ENCODE measurements at regions of chr12 and their contacts with region 1.

Region 1: DNA sequence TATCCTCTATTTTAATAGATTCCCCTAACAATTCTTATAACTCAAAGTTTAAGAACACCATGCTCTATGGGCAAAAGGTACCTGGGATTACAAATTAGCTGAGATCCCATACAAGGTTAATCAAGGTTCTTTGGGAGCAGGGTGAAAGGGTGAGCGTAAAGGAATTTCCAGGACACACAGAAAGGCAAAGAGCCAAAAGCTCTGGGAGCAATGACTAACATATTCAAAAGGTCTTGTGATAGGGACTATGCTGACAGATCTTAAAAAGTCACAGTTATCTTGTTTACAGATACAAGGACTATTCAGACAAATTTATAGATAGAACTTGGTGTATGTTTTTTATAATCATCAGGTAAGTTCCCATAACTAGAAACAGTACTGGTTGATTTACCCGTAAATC is 19.5 kb upstream of the PPFIBP1 start:
- DNase-seq: no peak
- H3K4me3 Mint-ChIP-seq: no peak overlapping the region
- H3K27ac Mint-ChIP-seq: no peak overlapping the region
- H3K4me1 Mint-ChIP-seq: peaks cover 30% of the 10 kb centered on the region
- H3K27me3 Mint-ChIP-seq: peaks cover 32% of the 10 kb centered on the region

Region 2: GRCh38 chr12:27383429-27384260 is 120.9 kb before region 1 on chr12:
- intact Hi-C with region 1: no loop called
- DNase-seq: peak; percentile 52
- H3K4me3 Mint-ChIP-seq: no peak overlapping the region
- H3K27ac Mint-ChIP-seq: no peak overlapping the region
- H3K4me1 Mint-ChIP-seq: peaks cover 5% of the 10 kb centered on the region
- H3K27me3 Mint-ChIP-seq: no peaks in the 10 kb centered on the region

Region 3: DNA sequence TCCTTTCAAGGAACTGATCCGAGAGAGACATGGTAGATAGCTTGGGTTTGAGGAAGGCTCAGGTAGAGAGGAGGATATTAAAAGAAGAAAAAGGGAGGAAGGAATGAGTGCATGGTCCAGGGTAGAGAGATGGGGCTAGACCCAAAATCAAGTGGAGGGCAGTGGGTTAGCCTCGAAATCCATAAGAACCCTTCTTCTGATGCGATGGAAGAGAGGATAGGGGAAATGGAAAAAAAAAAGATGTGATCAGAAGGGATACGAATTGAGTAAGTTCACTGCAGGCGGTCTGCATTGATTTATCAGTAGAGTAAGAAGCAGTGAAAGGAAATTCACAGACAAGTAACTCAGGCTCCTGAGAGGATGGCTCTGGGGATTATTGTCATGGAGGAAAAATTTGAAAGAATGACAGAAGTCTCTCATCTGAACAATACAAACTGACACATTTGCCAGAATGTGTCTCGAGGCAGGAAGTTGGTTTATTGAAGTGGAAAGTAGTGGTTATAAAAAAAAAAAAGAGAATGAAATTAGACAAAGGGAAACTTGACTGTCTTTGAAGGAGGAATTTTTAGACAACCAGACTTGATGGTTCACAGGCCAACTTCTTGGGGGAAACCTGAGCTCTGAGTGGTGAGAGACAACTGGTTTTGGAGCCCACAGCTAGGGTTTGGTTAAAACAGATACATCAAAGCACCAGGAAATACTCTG is 29.7 kb after region 1 on chr12:
- intact Hi-C with region 1: loop called (anchors 1 kb)
- DNase-seq: peak; percentile 19
- H3K4me3 Mint-ChIP-seq: peak overlapping the region; percentile 6
- H3K27ac Mint-ChIP-seq: peak overlapping the region; percentile 62
- H3K4me1 Mint-ChIP-seq: peaks cover 43% of the 10 kb centered on the region
- H3K27me3 Mint-ChIP-seq: peaks cover 3% of the 10 kb centered on the region

Region 4: DNA sequence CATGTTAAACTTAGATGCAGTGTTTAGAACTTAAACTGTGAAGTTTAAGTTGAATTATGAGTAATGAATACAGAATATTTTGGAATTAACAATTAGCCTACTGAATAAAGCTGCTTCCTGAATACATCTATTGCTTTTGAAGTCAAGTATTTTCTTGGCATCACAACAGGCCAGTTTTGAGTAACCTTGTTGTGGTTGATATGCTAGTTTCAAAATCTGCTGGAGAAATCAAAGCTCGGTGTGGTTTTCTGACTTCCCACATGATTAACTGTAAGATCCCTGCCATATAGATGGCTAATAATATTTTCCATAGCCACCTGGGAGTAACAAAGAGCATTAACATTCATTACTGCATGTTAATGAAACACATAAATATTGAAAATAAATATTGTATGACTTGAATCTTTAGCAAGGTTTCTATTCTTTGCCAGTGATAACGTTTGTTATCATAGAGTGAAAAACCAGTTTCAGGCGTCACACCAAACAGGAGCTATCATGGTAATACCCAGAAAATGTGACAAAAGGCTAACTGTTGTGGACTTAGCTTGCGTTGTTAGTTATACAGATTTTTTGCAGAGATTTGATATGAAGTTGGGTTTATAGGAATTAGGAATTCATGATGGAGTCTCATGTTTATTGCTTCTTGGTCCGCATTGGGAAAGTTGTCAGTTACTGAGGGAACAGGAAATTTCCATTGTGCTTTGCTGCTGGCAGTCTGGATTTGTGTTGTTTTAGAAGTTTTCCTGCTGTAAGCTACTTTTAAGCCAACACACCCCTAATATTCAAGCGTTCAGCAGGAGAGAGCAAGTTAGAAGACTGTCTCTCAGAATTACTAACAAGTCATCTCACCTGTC is 51.6 kb after region 1 on chr12:
- intact Hi-C with region 1: loop called (anchors 1 kb)
- DNase-seq: no peak
- H3K4me3 Mint-ChIP-seq: no peak overlapping the region
- H3K27ac Mint-ChIP-seq: no peak overlapping the region
- H3K4me1 Mint-ChIP-seq: peaks cover 25% of the 10 kb centered on the region
- H3K27me3 Mint-ChIP-seq: peaks cover 56% of the 10 kb centered on the region

Region 5: DNA sequence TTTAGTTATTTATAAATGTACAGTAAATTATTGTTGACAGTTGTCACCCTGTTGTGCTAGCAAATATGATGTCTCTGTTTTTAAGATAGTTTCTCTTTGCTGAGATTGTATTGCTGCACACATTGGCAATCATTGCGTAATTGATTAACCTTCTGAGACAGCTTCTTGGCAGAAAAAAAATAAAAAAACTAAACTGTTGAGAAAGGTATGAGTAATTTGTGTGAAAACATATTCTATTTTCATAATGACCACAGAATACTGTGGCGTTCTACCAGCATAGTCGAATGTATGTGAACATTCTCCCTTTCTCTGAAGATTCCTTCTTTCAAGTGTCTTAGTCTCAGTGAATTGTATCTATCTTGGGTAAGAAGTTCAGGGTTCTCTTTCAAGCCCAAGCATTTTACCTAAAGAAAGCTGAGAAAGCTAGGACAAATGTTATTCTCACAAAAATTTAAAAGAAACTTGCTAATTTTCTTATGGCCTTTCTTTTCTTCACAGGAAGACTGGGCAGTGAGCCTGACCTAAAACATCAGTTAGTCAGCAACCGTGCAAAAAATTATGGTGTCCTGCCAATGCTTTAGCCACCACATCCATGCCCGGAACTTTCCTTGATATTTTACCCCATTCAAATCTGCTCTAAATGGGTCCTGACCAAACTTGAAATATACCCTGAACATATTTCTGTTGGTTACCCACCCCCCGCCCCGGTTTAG is 122.8 kb after region 1 on chr12:
- intact Hi-C with region 1: loop called (anchors 1 kb)
- DNase-seq: no peak
- H3K4me3 Mint-ChIP-seq: no peak overlapping the region
- H3K27ac Mint-ChIP-seq: no peak overlapping the region
- H3K4me1 Mint-ChIP-seq: peaks cover 30% of the 10 kb centered on the region
- H3K27me3 Mint-ChIP-seq: peaks cover 3% of the 10 kb centered on the region

Region 6: DNA sequence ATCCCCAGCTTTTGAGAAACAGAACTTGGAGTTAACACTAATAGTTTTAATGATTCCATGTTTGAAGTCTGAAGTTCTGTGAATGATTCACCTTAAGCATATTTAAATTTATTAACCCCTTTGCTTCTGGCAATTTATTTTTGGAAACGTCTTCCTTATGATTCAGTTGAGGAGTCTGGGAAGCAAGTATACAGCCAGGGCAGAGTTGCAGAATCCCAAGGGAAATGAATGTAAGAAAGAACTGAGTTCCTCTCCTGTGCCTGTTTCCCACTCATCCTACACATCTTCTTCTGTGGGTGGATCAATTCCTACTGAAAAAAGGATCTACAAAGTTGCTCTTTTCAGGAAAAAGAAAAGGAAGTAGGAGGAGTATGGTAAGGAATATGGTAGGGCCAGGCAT is 577.6 kb after region 1 on chr12:
- intact Hi-C with region 1: no loop called
- DNase-seq: no peak
- H3K4me3 Mint-ChIP-seq: no peak overlapping the region
- H3K27ac Mint-ChIP-seq: no peak overlapping the region
- H3K4me1 Mint-ChIP-seq: peaks cover 6% of the 10 kb centered on the region
- H3K27me3 Mint-ChIP-seq: peaks cover 12% of the 10 kb centered on the region